ENCODE measurements at regions of chr9 and their contacts with region 1.

Region 1: GRCh38 chr9:5714501-5715401 is 85.8 kb downstream of the RIC1 start:
- DNase-seq: no peak
- ATAC-seq: no peak

Region 2: DNA sequence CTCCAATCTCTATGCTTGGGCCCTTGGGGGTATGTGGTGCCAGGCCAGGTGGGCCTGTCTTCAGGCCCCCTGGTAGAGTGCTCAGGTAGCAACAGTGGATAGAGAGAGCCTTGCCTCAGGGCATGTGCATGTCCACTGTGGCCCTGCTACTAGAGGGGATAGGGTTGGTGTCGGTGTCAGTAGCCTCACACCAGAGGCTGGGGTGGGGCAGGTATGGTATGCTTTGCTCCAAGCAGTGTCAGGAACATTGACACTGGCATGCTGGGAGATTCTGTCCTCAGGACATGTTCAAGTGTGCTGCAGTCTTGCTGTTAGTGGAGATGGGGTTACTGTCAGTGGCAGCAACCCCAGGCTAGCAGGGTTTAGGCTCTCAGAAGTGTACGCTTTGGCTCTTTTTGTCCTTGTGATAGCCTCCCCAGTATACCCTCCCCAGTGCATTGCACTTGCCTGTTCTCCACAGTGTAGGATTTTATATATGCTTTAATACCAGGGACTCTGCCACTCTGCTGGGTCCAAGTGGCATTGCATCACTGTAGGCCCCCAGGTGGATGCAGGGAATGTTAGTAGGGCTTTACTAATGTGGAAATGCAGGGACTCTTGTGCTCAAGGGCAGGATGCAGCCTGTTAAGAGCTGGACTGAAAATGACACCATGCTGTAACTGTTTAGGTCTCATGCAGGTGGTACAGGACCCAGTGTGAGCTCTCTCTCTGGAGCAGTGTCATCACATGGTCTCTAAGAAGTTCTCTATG is 64.2 kb before region 1 on chr9:
- intact Hi-C with region 1: loop called (anchors 10 kb)
- DNase-seq: no peak
- ATAC-seq: no peak

Measured in left ventricle myocardium superior (tissue), 1 donor.